Calu3 (cell line): ENCODE measurements at regions of chr15 and their contacts with region 1.

Region 1: GRCh38 chr15:61541516-61541915 is 312.4 kb upstream of the RORA start:
- DNase-seq: no peak
- H3K4me3 Mint-ChIP-seq: no peak overlapping the region
- H3K27ac Mint-ChIP-seq: no peak overlapping the region
- H3K4me1 Mint-ChIP-seq: no peaks in the 10 kb centered on the region
- H3K27me3 Mint-ChIP-seq: peaks cover 73% of the 10 kb centered on the region
- CTCF ChIP-seq: no peak

Region 2: GRCh38 chr15:61558172-61559136 is 16.9 kb after region 1 on chr15:
- CTCF ChIA-PET with region 1: interaction called, 4 read pairs
- intact Hi-C with region 1: loop called (anchors 2 kb)
- DNase-seq: no peak
- H3K4me3 Mint-ChIP-seq: no peak overlapping the region
- H3K27ac Mint-ChIP-seq: no peak overlapping the region
- H3K4me1 Mint-ChIP-seq: no peaks in the 10 kb centered on the region
- H3K27me3 Mint-ChIP-seq: peaks cover 88% of the 10 kb centered on the region
- CTCF ChIP-seq: no peak